ENCODE measurements at regions of chr6 and their contacts with region 1.

Region 1: GRCh38 chr6:83615025-83615999 is 93.6 kb downstream of the SNAP91 start:
- DNase-seq: peak; percentile 14
- CTCF ChIP-seq: peak; percentile 27

Region 2: GRCh38 chr6:83601119-83601518 is 14.2 kb before region 1 on chr6:
- CTCF ChIA-PET with region 1: interaction called, 17 read pairs
- POLR2A ChIA-PET with region 1: no interaction called
- DNase-seq: no peak
- CTCF ChIP-seq: no peak

Region 3: DNA sequence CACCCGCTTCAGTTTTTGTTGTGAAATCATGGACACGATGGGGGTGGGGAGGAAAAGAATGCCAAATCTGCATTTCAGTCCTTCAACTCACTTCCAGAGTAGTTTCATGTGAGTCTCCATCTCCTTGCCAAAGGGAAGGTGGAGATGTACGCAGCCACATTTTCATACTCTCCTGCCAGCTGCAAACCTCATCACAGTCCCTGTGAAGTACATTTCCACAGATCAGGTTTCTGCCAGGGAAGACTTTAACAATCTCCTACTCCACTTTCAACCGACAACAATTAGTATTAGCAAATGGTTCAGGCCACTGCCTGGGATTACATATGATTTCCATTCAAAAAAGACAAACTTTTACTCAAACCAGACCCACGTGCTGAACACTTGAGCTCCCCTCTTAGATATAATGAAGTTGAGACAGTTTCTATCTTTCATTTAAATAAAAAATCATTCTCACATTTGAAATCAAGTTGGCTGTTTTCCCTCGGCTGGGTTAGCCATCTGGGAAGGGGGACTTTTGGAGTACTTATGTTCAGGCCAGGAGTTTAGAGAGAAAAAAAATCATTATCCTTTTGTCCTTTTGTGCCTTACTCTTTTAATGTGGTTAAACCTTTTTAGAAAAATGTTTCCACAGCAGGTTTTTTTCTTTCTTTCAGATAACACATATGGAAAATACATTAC is 663.1 kb after region 1 on chr6:
- CTCF ChIA-PET with region 1: no interaction called
- POLR2A ChIA-PET with region 1: no interaction called
- DNase-seq: no peak
- CTCF ChIP-seq: no peak

Measured in GM10248 (cell line).